Heart left ventricle (tissue), 16 donors: ENCODE measurements at regions of chr1 and their contacts with region 1.

Region 1: DNA sequence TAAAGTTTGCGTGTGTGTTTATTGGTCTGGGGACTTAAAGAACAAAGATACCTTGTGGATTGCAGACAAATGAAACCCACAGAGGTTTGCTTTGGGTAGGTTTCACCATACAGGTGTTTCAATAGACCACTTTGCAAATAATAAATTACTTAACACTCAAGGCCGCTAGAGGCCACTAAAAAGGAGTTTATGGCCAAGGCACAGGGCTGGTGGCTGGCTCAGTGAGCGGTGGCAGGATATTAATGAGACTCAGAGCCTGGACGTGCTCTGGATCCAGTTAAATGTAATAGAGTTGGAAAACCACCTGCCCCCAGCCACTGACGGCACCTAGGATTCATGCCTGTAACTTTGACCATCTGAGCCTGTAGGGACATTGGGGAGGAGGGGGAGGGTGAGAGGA is 44.5 kb downstream of the LRRC38 start:
- DNase-seq: peak in 4 of 5 donors; percentile 7 to 45 (median 26)
- ATAC-seq: peak in 3 of 4 donors; percentile 60 to 77 (median 66)
- H3K4me3 ChIP-seq: no peak overlapping the region
- H3K27ac ChIP-seq: no peak overlapping the region
- H3K4me1 ChIP-seq: no peaks in the 10 kb centered on the region
- H3K27me3 ChIP-seq: no peaks in the 10 kb centered on the region
- CTCF ChIP-seq: peak in 9 of 12 donors; percentile 18 to 43 (median 28)
- POLR2A ChIP-seq: no peak

Region 2: GRCh38 chr1:13549521-13549920 is 80.2 kb after region 1 on chr1:
- intact Hi-C with region 1: loop called in 5 of 10 experiments (anchors 1 to 10 kb)
- DNase-seq: no peak
- ATAC-seq: no peak
- H3K4me3 ChIP-seq: no peak overlapping the region
- H3K27ac ChIP-seq: no peak overlapping the region
- H3K4me1 ChIP-seq: peaks cover 0 to 3% (median 0%) of the 10 kb centered on the region in 12 donors
- H3K27me3 ChIP-seq: no peaks in the 10 kb centered on the region
- CTCF ChIP-seq: no peak
- POLR2A ChIP-seq: no peak